PC-3 (cell line): ENCODE measurements at regions of chr17 and their contacts with region 1.

Region 1: DNA sequence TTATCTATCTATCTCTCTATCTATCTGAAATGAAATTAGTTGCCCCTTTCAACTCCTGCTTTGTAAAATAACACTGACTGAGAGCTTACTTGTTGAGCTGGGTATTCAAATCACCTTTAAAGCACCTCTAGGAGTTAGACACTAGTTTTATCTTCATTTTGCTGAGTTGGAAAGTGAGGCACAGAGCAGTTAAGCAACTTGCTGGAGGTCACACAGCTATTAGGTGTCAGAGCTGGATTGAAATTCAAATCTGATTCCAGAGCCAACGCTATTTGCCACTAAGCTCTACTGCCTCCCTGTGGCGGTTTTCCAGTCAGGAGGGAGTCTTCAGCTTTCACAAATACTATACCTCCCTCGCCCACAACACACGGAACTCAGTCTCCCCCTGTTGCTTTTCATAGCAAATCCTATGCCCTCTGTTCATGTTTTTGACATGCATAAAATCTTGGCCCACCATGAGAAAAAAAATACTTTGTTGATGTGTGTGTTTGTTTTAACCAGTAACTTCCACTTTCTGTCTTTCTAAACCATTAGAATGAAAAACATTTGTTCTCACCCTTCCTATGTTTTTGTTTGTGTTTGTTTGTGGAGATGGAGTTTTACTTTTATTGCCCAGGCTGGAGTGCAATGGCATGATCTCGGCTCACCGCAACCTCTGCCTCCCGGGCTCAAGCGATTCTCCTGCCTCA is 74.8 kb upstream of the SMURF2 start:
- DNase-seq: peak; percentile 83
- ATAC-seq: peak; percentile 47
- H3K4me3 ChIP-seq: no peak overlapping the region
- H3K27ac ChIP-seq: no peak overlapping the region
- H3K4me1 ChIP-seq: peaks cover 20% of the 10 kb centered on the region
- H3K27me3 ChIP-seq: no peaks in the 10 kb centered on the region
- CTCF ChIP-seq: peak; percentile 93

Region 2: GRCh38 chr17:64506576-64507477 is 230.1 kb before region 1 on chr17 and contains the start of gene CEP95:
- CTCF ChIA-PET with region 1: interaction called, 3 read pairs
- POLR2A ChIA-PET with region 1: no interaction called
- intact Hi-C with region 1: loop called (anchors 1 kb)
- DNase-seq: peak; percentile 96
- ATAC-seq: peak; percentile 66
- H3K4me3 ChIP-seq: peak within 1 kb of the TSS; percentile 86
- H3K27ac ChIP-seq: peak within 1 kb of the TSS; percentile 90
- H3K4me1 ChIP-seq: peaks cover 34% of the 10 kb centered on the region
- H3K27me3 ChIP-seq: no peaks in the 10 kb centered on the region
- CTCF ChIP-seq: no peak
- total RNA-seq, gene CEP95: 32.4 and 59.1 TPM in 2 replicates

Region 3: GRCh38 chr17:64661976-64662773 is 74.8 kb before region 1 on chr17 and contains the start of gene SMURF2:
- CTCF ChIA-PET with region 1: interaction called, 3 read pairs
- POLR2A ChIA-PET with region 1: interaction called, 6 read pairs
- intact Hi-C with region 1: loop called (anchors 2 kb)
- DNase-seq: peak; percentile 74
- ATAC-seq: peak; percentile 74
- H3K4me3 ChIP-seq: peak within 1 kb of the TSS; percentile 99
- H3K27ac ChIP-seq: peak within 1 kb of the TSS; percentile 87
- H3K4me1 ChIP-seq: peaks cover 47% of the 10 kb centered on the region
- H3K27me3 ChIP-seq: no peaks in the 10 kb centered on the region
- CTCF ChIP-seq: no peak
- total RNA-seq, gene SMURF2: 68.2 and 76.6 TPM in 2 replicates

Region 4: GRCh38 chr17:64707019-64707591 is 29.8 kb before region 1 on chr17:
- CTCF ChIA-PET with region 1: interaction called, 5 read pairs
- POLR2A ChIA-PET with region 1: no interaction called
- intact Hi-C with region 1: loop called (anchors 2 kb)
- DNase-seq: peak; percentile 100
- ATAC-seq: peak; percentile 88
- H3K4me3 ChIP-seq: peak overlapping the region; percentile 50; the same call in 1 of the 2 replicates
- H3K27ac ChIP-seq: peak overlapping the region; percentile 98
- H3K4me1 ChIP-seq: peaks cover 46% of the 10 kb centered on the region
- H3K27me3 ChIP-seq: no peaks in the 10 kb centered on the region
- CTCF ChIP-seq: no peak

Region 5: DNA sequence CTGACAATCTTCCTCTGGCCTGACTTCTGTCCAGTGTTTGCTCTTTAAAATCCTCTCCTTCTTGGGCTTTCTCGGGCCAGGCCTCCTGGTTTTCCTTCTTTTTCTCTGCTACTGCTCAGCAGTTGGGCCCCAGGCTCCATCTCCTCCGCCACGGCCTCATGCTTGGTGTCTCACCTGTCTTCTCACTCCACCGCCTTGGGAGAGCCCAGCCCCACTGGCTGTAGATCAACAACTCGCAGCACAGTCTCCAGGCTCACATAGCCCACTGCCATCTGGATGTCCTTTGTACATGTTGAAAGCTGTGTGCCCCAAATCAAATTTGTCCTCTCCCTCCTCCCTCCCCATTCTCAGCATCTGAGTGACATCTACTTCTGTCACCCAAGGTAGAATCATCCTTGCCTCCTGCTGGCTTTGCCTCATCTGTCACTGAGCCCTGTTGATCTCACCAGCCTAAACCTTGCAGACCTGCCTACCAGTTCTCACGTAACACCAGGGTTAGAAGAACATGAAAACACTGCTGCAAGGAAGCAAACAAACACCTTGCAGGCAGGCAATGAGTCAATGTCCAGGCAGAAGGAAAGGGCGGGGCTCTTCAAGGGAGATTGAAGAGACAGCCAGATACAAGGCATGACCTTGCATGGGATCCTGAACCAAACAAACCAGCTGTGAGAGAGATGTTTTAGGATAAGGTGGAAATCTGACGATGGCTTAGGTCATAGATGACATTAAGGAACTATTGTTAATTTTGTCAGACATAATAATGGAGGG is 28.4 kb after region 1 on chr17:
- CTCF ChIA-PET with region 1: no interaction called
- POLR2A ChIA-PET with region 1: no interaction called
- intact Hi-C with region 1: no loop called
- DNase-seq: peak; percentile 71
- ATAC-seq: peak; percentile 87
- H3K4me3 ChIP-seq: no peak overlapping the region
- H3K27ac ChIP-seq: no peak overlapping the region; the same call in 1 of the 2 replicates
- H3K4me1 ChIP-seq: peaks cover 10% of the 10 kb centered on the region
- H3K27me3 ChIP-seq: no peaks in the 10 kb centered on the region
- CTCF ChIP-seq: no peak

Region 6: GRCh38 chr17:64964796-64965195 is 227.8 kb after region 1 on chr17:
- CTCF ChIA-PET with region 1: no interaction called
- POLR2A ChIA-PET with region 1: no interaction called
- intact Hi-C with region 1: no loop called
- DNase-seq: no peak
- ATAC-seq: no peak
- H3K4me3 ChIP-seq: no peak overlapping the region
- H3K27ac ChIP-seq: no peak overlapping the region
- H3K4me1 ChIP-seq: peaks cover 34% of the 10 kb centered on the region
- H3K27me3 ChIP-seq: no peaks in the 10 kb centered on the region
- CTCF ChIP-seq: no peak

Region 7: GRCh38 chr17:65219124-65219523 is 482.2 kb after region 1 on chr17:
- CTCF ChIA-PET with region 1: no interaction called
- POLR2A ChIA-PET with region 1: no interaction called
- intact Hi-C with region 1: no loop called
- DNase-seq: no peak
- ATAC-seq: peak; percentile 60; the same call in 1 of the 2 replicates
- H3K4me3 ChIP-seq: no peak overlapping the region
- H3K27ac ChIP-seq: no peak overlapping the region
- H3K4me1 ChIP-seq: peaks cover 8% of the 10 kb centered on the region
- H3K27me3 ChIP-seq: peaks cover 43% of the 10 kb centered on the region
- CTCF ChIP-seq: peak; percentile 63

Region 8: GRCh38 chr17:65438708-65439294 is 701.9 kb after region 1 on chr17:
- CTCF ChIA-PET with region 1: no interaction called
- POLR2A ChIA-PET with region 1: no interaction called
- intact Hi-C with region 1: no loop called
- DNase-seq: peak; percentile 60
- ATAC-seq: peak; percentile 72; the same call in 1 of the 2 replicates
- H3K4me3 ChIP-seq: no peak overlapping the region
- H3K27ac ChIP-seq: no peak overlapping the region
- H3K4me1 ChIP-seq: peaks cover 4% of the 10 kb centered on the region; the same call in 1 of the 2 replicates
- H3K27me3 ChIP-seq: peaks cover 6% of the 10 kb centered on the region; the same call in 1 of the 2 replicates
- CTCF ChIP-seq: no peak